ENCODE measurements at regions of chr5 and their contacts with region 1.

Region 1: GRCh38 chr5:99032234-99033013 is 103.6 kb upstream of the CHD1 start:
- DNase-seq: peak; percentile 56
- H3K4me3 ChIP-seq: no peak overlapping the region
- H3K27ac ChIP-seq: no peak overlapping the region
- H3K4me1 ChIP-seq: peaks cover 11% of the 10 kb centered on the region
- CTCF ChIP-seq: peak; percentile 90

Region 2: DNA sequence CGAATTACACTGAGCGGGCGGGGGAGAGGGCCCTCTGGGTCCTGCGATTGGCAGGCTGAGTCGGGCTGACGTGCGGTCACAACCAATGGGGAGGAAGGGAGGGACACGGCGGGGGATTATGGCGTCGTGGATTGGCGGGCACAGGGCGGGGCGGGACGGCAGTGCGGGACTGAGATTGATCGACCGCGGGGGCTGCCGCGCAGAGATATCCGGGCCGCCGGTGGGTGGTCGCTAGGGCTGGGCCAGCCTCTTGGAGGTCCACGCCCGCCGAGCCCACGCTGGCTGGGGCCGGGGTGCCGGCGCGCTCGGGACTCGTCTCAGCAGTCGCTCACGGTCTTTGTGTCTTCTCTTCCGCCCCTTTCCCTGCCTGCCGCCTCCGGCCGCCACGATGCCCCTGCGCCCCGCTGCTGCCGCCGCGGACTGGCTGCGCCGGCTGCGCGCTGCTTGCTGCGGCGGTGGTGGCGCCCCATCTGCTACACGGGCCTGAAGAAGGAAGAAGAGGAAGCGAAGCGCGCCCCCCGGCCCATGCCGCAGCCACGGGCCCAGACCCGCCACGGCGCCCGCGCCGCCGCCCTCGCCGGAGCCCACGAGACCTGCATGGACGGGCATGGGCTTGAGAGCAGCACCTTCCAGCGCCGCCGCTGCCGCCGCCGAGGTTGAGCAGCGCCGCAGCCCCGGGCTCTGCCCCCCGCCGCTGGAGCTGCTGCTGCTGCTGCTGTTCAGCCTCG is 258.8 kb before region 1 on chr5 and contains the start of gene RGMB:
- CTCF ChIA-PET with region 1: no interaction called
- POLR2A ChIA-PET with region 1: no interaction called
- intact Hi-C with region 1: loop called (anchors 1 kb)
- DNase-seq: peak; percentile 95
- H3K4me3 ChIP-seq: peak within 1 kb of the TSS; percentile 90
- H3K27ac ChIP-seq: peak within 1 kb of the TSS; percentile 56
- H3K4me1 ChIP-seq: peaks cover 40% of the 10 kb centered on the region
- CTCF ChIP-seq: peak; percentile 31; the same call in 1 of the 2 replicates
- total RNA-seq, gene RGMB: 9.2 and 9.3 TPM in 2 replicates

Region 3: DNA sequence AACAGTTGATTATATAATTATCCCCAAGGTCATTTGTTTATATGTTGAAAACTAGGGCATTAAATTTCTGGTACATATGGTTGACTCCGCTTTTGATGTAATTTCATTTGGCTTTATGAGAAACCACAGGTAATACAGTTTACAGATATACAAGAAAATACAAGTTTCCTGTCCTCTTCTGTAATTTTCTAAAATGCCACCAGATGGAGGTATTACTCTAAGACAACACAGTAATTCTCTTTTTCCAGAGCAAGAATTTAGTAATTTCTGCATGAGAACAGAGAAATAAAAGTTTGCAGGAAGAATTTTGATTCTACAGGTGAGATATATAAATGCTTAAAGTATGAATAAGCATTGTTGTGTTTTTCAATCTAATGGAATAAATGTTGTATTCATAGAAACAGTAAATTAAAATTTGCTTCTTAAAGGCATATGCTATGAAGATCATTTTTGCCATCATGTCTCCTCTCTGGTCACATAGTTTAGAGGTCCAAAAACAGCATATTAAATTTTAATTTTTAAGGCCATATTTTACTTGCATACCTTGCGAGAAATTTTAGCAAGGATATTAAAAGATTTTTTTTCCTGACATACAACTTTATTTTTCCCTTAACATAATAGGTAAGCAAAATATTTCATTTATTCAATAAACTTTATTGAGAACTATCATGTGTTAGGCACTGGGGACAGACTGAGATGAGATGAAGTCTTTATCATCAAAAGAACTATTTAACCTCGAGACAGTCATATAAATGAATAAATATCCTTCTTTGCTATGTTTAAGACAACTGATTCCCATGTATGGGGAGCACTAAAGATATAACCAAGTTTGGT is 126.3 kb before region 1 on chr5:
- CTCF ChIA-PET with region 1: interaction called, 4 read pairs
- POLR2A ChIA-PET with region 1: interaction called, 3 read pairs
- intact Hi-C with region 1: loop called (anchors 1 kb)
- DNase-seq: peak; percentile 49
- H3K4me3 ChIP-seq: no peak overlapping the region
- H3K27ac ChIP-seq: no peak overlapping the region
- H3K4me1 ChIP-seq: no peaks in the 10 kb centered on the region
- CTCF ChIP-seq: peak; percentile 92

Region 4: GRCh38 chr5:98928873-98929696 is 103.3 kb before region 1 on chr5 and contains the start of gene CHD1:
- CTCF ChIA-PET with region 1: no interaction called
- POLR2A ChIA-PET with region 1: no interaction called
- intact Hi-C with region 1: loop called (anchors 1 kb)
- DNase-seq: peak; percentile 94
- H3K4me3 ChIP-seq: peak within 1 kb of the TSS; percentile 76
- H3K27ac ChIP-seq: no peak within 1 kb of the TSS
- H3K4me1 ChIP-seq: peaks cover 4% of the 10 kb centered on the region
- CTCF ChIP-seq: no peak
- total RNA-seq, gene CHD1: 10.3 and 23.3 TPM in 2 replicates